Posterior cingulate gyrus (tissue), 11 donors: ENCODE measurements at regions of chr6 and their contacts with region 1.

Region 1: DNA sequence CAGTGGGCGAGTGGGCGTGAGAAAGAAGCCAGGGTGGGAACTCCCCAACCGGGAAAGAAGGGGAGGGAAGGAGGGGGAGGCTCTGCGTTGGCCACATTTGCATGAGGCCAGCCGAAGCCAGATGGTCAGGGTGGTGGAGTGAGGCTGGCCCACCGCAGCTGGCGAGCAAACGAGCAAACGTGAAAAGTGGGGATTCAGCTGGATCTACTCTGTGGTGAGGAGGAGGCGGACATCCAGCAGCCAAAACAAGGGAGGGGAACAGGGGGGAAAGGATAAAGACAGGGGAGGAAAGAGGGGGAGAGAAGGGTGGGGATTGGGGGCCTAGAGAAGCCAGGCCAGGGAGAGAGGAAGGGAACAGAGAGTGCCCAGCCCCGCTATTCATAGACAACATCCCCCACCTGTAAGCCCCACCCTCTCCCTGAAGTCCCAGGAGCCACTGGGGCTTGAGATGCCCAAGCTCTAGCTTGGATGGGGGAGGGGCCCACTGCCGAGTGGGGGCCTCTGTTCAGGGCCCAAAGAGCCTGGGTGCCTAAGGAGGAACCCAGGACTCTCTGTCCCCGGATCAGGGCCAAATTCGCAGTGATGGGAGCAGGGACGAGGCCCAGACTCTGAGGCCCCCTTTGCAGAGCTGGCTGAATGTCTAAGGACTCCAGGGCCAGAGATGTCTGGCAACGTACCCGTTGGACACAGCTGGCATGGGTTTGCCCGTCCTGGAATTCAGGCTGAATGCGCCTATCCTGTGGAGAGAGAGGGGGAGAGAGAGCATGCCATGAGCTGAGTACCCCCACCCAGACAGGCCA is 45.1 kb downstream of the CPNE5 start:
- DNase-seq: peak in 8 of 10 donors; percentile 23 to 91 (median 40)

Region 2: DNA sequence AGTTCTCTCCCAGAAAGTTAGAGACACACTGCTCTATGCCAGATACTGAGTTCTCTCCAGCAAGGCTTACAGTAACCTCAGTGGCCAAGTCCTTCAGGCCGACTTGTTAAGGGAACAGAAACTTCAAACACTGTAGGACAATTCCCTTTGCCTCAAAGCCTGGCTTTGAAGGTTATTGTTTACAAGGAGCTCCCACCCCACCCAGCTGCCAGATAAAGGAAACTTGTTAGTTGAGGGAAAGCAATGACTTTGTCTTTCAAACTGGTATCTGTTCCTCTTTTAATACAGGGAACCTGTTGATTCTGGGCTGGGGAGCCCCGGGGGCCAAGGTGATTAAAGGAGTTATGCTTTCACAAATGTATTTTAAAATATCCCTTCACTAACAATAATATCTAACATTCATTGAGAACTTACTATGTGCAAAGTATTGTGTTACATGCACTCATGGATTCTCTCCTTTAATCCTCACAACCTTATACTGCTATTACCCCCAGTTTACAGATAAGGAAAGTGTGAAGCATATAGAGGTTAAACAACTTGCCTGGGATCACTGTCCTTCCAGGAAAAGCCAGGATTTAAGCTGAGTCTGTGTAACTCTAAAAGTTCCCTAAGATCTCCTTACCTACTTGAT is 143.2 kb before region 1 on chr6:
- intact Hi-C with region 1: no loop called
- DNase-seq: peak in 1 of 10 donors; percentile 9

Region 3: DNA sequence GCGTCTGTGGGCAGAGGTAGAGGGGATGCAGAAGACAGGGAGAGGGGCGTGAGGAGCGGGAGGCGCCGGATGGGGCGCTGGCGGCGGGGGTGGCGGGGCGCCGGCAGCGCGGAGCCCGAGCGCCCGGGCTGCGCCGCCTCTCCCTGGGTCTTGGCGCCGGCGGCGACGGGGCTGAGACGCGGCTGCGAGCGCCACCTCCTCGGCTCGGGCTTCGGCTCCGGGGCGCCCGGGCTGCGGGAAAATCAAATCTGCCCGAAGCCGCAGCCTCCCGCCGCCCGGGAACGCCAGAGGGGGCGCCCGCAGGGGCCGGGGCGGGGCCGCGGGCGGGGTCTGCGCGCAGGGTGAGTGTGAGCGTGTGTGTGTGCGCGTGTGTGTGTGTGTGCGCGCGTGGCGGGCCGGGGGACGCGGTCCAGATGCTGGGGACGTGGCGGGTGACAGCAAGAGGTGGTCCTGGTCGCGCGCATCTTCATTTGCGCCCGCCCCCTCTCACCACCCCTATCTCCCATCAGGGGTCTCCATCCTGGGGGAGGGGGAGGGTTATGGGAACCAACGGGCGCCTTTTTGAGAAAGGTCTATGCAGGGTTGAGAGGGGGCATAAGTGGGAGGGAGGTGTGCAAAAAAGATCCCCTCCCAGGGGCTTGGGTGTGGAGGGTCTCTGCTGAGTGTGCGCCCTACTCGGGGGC is 45.8 kb after region 1 on chr6:
- intact Hi-C with region 1: loop called (anchors 5 kb)
- DNase-seq: peak in 7 of 10 donors; percentile 42 to 93 (median 55)